Common myeloid progenitor, CD34-positive (primary cell): ENCODE measurements at regions of chr17 and their contacts with region 1.

Region 1: DNA sequence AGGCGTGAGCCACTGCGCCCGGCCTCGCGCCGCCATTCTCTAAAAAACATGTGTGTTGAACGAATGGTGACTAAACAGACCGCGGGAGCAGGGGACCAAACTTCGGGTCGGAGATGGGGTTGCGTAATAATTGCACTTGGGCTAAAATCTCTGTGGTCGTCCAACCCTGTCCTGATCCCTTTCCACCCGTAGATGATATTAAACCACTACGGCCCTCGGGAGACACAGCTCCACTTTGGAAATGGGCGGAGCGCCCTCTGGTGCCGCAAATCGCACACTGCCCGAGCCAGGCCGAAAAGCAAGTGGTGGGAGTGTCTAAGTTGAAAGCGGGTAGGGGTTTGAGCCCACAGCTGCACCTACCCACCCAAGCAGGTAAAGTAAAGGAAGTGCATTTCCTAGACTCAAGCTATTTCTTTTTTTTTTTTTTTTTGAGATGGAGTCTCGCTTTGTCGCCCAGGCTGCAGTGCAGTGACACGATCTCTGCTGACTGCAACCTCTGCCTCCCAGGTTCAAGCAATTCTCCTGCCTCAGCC is 17.0 kb downstream of the CAVIN1 start:
- DNase-seq: peak; percentile 77 to 82 (median 82)
- H3K4me3 ChIP-seq: no peak overlapping the region
- H3K27ac ChIP-seq: no peak overlapping the region
- H3K4me1 ChIP-seq: peaks cover 0 to 47% (median 39%) of the 10 kb centered on the region in 4 experiments
- H3K27me3 ChIP-seq: no peaks in the 10 kb centered on the region

Region 2: DNA sequence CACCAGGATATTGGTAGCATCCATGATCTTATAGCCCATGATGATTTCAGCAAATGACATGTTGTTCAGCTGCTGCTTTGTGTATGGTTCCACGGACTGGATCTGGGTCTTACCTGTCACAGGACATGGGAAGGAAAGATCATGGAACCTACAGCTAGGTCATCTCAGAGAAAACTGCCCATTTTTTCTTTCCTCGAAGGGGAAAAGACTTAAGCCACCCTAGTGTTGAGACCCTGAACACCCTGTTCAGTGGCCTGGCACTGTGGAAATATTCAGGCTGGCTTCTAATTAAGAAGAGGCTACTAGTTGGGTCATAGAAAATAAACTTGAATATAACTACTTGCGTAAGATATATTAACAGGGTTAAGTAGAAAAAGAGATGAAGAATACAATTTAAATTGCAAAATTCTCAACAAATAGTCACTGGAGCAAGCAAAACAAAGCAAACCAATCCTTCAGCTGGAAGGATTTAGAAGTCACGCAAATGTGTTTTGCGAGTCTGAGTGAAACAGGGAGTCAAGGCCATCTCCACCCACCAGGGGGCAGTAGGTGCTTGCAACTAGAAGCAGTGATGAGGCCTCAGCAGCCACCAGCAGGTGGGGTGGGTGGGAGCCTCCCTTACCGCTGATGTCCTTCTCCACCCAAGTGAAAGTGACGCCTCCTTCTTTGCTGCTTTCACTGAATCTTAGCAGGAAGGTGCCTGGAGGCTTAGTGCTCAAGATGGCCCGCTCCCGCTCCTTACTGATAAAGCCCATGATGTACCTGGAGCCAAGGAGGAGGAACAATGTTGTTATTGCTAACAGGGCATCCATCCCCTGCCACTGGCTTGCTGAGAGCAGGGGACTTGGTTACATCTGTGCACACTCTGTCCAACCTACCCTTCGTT is 83.4 kb before region 1 on chr17:
- CTCF ChIA-PET with region 1: interaction called, 174 read pairs
- POLR2A ChIA-PET with region 1: interaction called, 11 read pairs
- DNase-seq: peak; percentile 96 to 98 (median 97)
- H3K4me3 ChIP-seq: peak overlapping the region in 2 of 7 experiments; percentile 19 to 38
- H3K27ac ChIP-seq: peak overlapping the region; percentile 98 to 99
- H3K4me1 ChIP-seq: peaks cover 24 to 56% (median 55%) of the 10 kb centered on the region in 4 experiments
- H3K27me3 ChIP-seq: no peaks in the 10 kb centered on the region

Region 3: GRCh38 chr17:42334677-42335076 is 71.4 kb before region 1 on chr17:
- CTCF ChIA-PET with region 1: interaction called, 28 read pairs
- POLR2A ChIA-PET with region 1: interaction called, 6 read pairs
- DNase-seq: no peak
- H3K4me3 ChIP-seq: no peak overlapping the region
- H3K27ac ChIP-seq: no peak overlapping the region
- H3K4me1 ChIP-seq: peaks cover 0 to 6% (median 3%) of the 10 kb centered on the region in 4 experiments
- H3K27me3 ChIP-seq: no peaks in the 10 kb centered on the region

Region 4: DNA sequence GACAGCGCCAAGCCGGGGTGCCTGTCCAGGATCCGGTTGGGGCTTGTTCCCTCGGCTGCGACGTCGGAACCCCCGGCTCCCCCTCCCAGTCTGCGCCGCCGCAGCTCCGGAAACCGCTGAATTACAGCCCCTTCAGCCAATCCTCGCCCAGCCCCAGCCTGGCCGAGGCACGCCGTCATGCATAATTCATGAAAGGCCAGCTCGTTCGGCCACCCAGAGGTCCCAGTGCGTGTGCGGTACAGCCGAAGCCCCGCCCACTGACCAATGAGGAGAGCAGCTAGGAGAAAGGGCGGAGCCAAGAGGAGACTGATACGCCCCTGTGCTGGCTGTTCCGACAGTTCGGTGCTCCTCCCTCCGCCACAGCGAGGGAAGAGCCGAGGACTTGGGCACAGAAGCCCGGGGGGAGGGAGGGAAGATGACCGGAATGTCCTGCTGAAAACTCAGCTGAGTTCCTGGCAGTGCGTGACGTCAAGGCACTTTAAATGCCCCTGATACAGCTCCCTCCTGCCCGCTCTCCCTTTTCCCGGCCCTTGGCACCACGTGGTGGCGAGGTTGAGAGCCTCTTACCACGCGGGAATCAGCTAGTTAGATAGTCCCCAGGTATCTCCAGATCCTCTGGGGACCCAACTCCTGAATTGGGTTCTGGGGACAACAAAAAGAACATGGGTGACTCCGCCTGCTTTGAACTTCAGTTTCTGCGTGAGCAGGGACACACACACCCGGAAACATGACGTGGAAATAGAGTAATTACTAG is 17.5 kb before region 1 on chr17 and contains the start of gene STAT3:
- CTCF ChIA-PET with region 1: interaction called, 27 read pairs
- POLR2A ChIA-PET with region 1: interaction called, 8 read pairs
- DNase-seq: peak; percentile 99 to 100 (median 100)
- H3K4me3 ChIP-seq: peak within 1 kb of the TSS; percentile 77 to 98 (median 93)
- H3K27ac ChIP-seq: peak within 1 kb of the TSS; percentile 98
- H3K4me1 ChIP-seq: peaks cover 19 to 38% (median 31%) of the 10 kb centered on the region in 4 experiments
- H3K27me3 ChIP-seq: no peaks in the 10 kb centered on the region